ENCODE measurements at regions of chr4 and their contacts with region 1.

Region 1: GRCh38 chr4:139603576-139604387 is 47.8 kb upstream of the SETD7 start:
- DNase-seq: peak in 2 of 5 donors; percentile 26 to 31
- ATAC-seq: peak in 3 of 4 donors; percentile 62 to 63 (median 63)
- H3K4me3 ChIP-seq: no peak overlapping the region
- H3K27ac ChIP-seq: no peak overlapping the region
- H3K4me1 ChIP-seq: peaks cover 0 to 15% (median 2%) of the 10 kb centered on the region in 12 donors
- H3K27me3 ChIP-seq: no peaks in the 10 kb centered on the region
- CTCF ChIP-seq: peak; percentile 59 to 80 (median 68)
- POLR2A ChIP-seq: no peak

Region 2: DNA sequence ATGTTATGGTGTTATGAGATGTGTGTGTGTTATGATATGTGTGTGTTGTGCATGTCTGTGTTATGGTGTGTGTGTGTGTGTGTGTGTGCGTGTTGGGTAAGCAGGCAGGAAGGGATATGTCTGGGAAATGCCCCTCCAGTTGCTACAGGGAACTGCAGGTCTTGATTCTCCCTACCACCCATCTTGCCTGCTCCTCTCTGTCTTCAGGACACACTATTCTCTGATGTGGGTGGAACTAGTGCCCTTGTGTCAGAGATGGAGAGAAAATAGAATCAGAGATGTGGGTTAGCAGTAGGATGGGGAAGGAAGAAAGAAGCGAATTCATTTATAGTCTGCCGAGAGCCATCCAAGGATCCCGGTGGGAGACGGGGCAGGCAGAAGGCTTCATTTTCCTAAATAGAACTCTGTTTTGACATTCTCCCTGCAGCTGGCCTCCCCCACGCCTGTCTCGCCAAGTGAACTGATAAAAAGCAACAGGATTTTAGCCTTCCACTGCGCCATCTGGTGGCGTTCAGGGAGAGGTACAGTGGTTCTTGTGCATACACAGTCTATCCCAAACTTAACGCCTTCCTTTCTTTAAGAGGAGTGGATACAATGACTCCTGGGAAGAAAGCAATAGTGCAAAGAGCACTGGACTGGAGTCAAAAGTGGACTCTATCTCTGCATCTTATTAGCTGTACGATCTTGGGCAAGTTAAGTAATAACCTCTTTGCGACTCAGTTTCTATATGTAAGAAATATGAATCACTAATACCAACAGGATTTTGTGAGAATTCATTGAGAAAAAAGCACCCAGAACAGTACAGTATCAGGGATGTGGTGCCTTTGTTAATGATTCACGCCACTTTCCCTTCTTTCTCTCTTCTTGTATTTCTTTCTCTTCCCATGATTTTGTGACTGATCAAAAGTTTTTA is 47.8 kb after region 1 on chr4:
- intact Hi-C with region 1: loop called (anchors 1 to 5 kb)
- DNase-seq: peak; percentile 81 to 92 (median 84)
- ATAC-seq: peak; percentile 75 to 90 (median 86)
- H3K4me3 ChIP-seq: peak overlapping the region in 5 of 12 donors; percentile 6 to 43 (median 26)
- H3K27ac ChIP-seq: no peak overlapping the region
- H3K4me1 ChIP-seq: peaks cover 0 to 10% (median under 1%) of the 10 kb centered on the region in 12 donors
- H3K27me3 ChIP-seq: no peaks in the 10 kb centered on the region
- CTCF ChIP-seq: peak; percentile 85 to 96 (median 92)
- POLR2A ChIP-seq: no peak

Region 3: DNA sequence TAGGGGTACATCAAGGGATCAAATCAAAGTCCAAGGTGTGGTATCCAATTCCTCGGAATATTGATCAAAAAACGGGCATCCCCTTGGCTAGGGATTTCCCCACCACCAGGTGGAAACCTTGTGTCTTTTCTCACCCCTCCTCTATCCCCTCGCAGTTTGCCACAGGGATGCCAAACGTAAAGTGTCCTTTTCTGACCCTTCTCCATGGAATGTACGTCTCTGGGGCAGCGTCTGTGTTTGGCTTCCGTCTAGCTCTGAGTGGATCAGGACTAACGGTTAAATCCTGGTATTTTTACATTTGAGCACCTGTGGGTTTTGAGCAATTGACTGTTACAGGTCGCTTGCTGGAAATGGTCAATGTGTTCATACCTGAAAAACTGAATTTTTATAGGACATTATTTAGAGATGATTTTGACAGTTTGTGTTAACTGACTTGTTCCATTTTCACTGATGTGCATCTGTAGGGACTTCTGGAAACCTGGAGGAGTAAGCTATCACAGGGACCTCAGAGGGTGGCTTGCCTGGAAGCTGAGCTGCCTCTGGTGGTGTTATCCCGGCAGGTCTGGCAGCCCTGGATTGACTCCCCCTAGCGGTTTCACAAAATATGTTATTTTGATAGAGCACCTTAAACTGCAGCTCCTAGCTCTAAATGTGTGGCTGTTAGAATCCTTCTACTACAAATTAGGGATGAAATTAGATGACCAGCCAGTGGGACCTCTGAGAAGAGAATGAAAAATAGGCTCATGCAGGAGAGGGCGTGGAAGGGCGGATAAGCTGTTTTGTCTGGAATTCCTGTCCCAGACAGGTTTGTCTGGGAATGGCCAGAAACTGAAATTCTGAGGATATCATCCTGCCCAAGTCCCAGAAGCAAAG is 53.1 kb after region 1 on chr4:
- intact Hi-C with region 1: loop called in 4 of 10 experiments (anchors 2 to 5 kb)
- DNase-seq: peak in 4 of 5 donors; percentile 46 to 60 (median 54)
- ATAC-seq: peak in 3 of 4 donors; percentile 68 to 80 (median 71)
- H3K4me3 ChIP-seq: no peak overlapping the region
- H3K27ac ChIP-seq: peak overlapping the region in 2 of 12 donors; percentile 28 to 32
- H3K4me1 ChIP-seq: peaks cover 0 to 37% (median 13%) of the 10 kb centered on the region in 12 donors
- H3K27me3 ChIP-seq: no peaks in the 10 kb centered on the region
- CTCF ChIP-seq: peak; percentile 68 to 88 (median 81)
- POLR2A ChIP-seq: no peak

Region 4: GRCh38 chr4:139849219-139849618 is 245.4 kb after region 1 on chr4:
- intact Hi-C with region 1: no loop called
- DNase-seq: no peak
- ATAC-seq: no peak
- H3K4me3 ChIP-seq: no peak overlapping the region
- H3K27ac ChIP-seq: no peak overlapping the region
- H3K4me1 ChIP-seq: peaks cover 0 to 7% (median 0%) of the 10 kb centered on the region in 12 donors
- H3K27me3 ChIP-seq: no peaks in the 10 kb centered on the region
- CTCF ChIP-seq: no peak
- POLR2A ChIP-seq: no peak